Posterior cingulate gyrus (tissue), 11 donors: ENCODE measurements at regions of chr1 and their contacts with region 1.

Region 1: DNA sequence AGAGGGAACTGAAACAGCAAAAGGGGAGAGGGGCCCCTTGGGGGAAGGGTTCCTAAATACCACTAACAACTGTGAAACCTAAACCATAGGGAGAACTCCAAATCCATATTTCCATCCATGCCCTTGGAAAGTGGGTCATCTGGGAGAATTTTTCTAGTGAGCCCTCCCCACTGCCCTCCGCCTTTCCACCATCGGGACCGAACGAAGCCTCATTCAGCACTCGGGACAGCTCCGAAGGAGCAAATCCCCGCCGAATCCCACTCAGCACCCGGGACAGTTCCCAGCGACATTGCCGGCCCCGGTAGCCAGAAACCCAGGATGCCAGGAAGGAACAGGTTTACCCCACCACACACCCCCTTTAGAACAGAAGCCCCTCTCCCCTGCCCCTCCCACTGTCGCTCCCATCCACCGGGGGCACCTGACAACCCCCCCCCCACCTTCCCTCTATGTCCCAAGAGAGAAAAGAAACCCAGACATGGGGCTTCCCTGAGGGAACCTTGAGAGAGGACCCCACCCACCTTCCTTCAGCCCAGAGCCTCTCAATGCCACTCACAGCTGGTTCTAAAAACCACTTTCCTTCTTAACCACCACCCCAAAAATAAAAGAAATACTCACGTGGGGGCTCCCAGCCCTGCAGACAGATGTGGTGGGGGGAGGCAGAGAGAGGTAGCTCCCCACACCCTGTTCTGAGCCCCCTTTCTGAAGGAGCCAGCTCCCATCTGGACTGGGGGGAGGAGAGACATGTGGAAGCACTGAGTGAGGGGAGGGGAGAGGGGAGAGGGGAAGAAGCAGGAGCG is 4.5 kb downstream of the DLGAP3 start:
- DNase-seq: peak in 6 of 10 donors; percentile 40 to 88 (median 52)

Region 2: DNA sequence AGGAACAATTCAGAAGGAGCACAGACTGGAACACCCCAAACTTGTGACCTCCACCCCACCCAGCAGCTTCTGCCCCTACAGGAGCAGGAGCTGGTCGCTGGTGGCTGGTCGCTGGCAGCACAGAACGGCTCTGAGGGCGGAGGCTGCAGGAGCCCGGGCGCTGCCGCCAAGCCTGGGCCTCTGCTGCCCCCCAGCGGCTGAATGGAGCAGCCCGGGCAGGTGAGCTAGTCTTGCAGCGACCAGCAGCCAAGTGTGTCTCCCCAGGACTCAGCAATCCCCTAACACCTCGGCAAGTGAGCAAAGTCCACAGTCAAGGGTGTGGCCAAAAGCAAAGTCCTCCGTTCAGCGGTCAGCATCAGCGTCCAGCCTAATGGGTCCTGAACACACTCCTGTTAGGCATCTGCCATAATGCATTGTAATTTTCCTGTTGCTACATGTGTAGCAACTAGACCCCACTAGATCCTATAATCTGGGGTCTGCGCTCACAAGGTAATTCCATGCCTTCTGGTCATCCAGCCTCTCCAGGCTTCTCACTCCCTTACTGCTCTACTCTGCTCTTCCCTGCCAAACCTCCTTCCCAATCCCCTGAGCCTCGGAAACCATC is 182.2 kb before region 1 on chr1:
- intact Hi-C with region 1: no loop called
- DNase-seq: peak; percentile 69 to 98 (median 86)

Region 3: GRCh38 chr1:34870395-34870794 is 54.6 kb before region 1 on chr1:
- intact Hi-C with region 1: loop called (anchors 5 kb)
- DNase-seq: peak in 9 of 10 donors; percentile 40 to 97 (median 81)

Region 4: GRCh38 chr1:34984793-34985608 is 60.0 kb after region 1 on chr1 and contains the start of gene TMEM35B:
- intact Hi-C with region 1: loop called (anchors 10 kb)
- DNase-seq: peak; percentile 44 to 94 (median 66)

Region 5: DNA sequence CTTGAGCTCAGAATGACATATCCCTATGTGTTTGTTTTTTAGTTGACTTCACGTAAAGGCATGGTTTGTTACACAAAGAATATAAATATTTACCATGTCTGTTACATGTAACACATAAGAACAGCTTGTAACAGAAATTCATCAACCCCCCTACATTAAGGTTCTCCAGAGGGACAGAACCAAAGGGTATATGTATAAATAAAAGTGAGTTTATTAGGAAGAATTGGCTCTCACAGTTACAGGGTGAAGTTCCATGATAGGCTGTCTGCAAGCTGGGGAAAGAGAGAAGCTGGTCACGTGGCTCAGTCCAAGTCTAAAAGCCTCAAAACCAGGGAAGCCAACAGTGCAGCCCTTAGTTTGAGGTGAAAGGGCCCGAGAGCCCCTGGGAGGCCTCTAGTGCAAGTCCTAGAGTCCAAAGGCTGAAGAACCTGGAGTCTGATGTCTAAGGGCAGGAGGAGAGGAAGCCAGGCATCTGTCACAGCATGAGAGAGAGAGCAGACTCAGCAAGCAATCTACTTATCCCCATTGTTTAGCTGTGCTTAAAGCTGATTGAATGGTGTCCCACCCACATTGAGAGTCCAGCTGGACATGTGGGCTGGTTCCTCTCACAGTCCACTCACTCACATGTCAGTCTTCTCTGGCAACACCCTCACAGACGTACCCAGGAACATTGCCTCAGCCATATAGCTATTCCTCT is 1315.1 kb after region 1 on chr1:
- intact Hi-C with region 1: no loop called
- DNase-seq: peak in 1 of 10 donors; percentile 9